A549 (cell line): ENCODE measurements at regions of chr20 and their contacts with region 1.

Region 1: GRCh38 chr20:54680872-54681619 is 205.7 kb downstream of the DOK5 start:
- DNase-seq: peak in 1 of 2 experiments; percentile 51
- ATAC-seq: peak in 1 of 2 experiments; percentile 69; a peak in 3 of 6 replicates
- H3K4me3 ChIP-seq: no peak overlapping the region
- H3K27ac ChIP-seq: no peak overlapping the region
- H3K4me1 ChIP-seq: no peaks in the 10 kb centered on the region
- CTCF ChIP-seq: peak; percentile 51
- EP300 ChIP-seq: no peak
- POLR2A ChIP-seq: no peak
- RAD21 ChIP-seq: peak; percentile 70

Region 2: DNA sequence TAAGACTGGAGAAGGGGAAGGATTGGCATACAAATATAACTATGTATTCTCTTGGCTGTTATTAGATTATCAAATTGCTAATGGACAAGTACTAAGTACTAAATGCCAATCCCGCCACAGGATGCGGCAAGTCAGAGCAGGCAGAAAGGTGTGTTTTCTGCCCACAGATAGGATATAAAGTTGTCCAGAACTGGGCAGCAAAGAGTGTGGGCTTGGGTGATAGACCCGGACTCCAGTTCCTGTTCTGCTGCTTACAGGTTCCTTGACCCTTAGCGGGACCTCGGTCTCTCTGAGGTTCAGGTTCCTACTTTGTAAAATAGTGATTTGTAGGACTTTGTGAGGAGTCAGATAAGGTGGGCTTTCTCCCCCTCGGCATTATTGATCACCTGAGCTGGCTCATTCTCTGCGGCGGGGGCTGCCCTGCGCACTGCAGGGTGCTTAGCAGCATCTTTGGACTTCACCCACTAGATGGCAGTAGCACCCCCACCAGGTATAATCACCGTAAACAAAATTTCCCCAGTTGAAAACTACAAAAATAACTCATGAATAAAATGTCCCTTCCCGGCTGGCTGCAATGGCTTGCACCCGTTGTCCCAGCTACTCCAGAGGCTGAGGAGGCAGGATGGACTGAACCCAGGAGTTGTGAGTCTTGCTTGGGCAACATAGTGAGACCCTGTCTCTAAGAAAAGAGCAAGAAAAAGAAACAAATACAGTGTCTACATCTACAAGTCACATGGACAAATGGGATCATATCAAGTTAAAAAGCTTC is 12.6 kb before region 1 on chr20:
- CTCF ChIA-PET with region 1: interaction called, 34 read pairs
- POLR2A ChIA-PET with region 1: no interaction called
- DNase-seq: peak; percentile 18 to 26
- ATAC-seq: peak; percentile 88 to 94
- H3K4me3 ChIP-seq: 0 out of 3 replicates have a peak overlapping the region, but pooled peaks have one; percentile 11
- H3K27ac ChIP-seq: no peak overlapping the region
- H3K4me1 ChIP-seq: no peaks in the 10 kb centered on the region
- CTCF ChIP-seq: peak; percentile 75
- EP300 ChIP-seq: no peak
- POLR2A ChIP-seq: no peak
- RAD21 ChIP-seq: peak; percentile 41 to 50; a peak in 4 of 5 replicates

Region 3: DNA sequence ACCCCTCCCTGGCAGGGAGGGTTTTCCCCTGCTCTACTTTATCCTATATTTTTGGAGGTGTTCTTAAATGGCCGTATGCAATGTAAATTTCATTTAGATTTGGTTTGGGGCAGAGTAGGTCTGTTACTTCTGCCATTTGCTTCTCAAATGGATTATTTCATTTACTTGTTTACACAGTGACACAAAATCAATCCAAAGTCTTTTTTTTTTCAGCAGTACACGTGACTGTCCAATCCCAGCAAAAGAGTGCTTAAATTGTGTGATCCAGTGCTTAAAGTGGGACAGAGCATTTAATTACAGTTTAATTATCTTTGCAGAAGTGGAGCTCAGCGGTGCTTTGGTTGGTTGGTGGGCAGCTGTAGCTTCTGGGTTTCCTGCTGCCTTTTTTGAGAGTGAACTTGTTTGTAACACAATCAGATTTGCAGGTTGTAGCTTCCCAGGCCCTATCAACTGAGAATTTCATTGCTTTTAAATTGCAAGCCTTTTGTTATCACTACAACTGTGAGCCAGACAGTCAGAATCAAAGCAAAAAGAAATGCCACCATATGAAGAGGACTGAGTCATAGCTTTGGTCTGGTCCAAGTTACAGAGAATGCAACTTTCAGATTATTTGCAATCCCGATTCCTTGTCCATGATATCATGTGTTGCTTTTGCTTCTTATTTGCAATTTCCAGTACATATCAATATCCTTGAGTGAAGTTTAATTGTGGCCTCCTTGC is 11.3 kb after region 1 on chr20:
- CTCF ChIA-PET with region 1: interaction called, 11 read pairs
- POLR2A ChIA-PET with region 1: no interaction called
- DNase-seq: no peak
- ATAC-seq: no peak
- H3K4me3 ChIP-seq: no peak overlapping the region
- H3K27ac ChIP-seq: no peak overlapping the region
- H3K4me1 ChIP-seq: no peaks in the 10 kb centered on the region
- CTCF ChIP-seq: no peak
- EP300 ChIP-seq: no peak
- POLR2A ChIP-seq: no peak
- RAD21 ChIP-seq: no peak